ENCODE measurements at regions of chr3 and their contacts with region 1.

Region 1: DNA sequence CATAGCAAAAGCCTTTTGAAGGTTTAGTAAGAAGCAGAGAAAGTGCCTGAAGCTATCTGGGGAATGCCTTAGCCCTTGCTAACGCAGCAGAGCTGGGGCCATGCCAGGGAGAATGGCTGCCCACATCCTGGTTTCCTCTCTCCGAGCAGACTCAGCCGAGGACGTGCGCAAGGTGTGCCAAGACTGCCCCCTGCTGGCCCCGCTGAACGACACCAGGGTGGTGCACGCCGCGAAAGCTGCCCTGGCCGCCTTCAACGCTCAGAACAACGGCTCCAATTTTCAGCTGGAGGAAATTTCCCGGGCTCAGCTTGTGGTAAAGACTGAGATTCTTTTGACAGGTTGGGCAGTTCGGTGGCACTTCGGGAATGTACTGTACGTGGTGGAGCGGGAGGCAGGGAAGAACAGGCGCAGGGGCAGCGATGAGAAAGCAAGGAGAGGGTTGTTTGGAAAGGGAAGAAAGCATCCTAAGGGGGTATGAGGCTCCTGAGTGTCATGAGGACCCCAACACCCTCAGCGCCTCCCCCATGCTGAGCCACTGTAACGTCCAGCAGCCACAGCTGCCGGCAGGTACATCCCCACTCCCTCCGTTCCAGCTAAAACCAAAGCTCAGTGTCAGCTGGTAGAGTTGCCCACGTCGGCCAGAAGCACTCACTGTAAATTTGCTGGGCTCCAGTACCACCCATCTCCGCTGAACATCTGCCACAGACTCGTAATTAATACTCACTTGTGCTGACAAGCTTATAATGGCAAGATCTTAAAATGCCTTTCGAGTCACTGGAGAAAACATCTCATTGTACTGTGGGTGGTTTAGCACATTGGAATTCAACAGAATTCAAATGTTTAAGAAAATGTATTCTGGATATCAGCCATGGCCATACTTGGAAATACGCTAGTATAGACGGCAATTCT is 4.4 kb downstream of the AHSG start:
- DNase-seq: peak; percentile 93
- ATAC-seq: peak; percentile 99
- H3K4me3 Mint-ChIP-seq: peak overlapping the region; percentile 63
- H3K27ac Mint-ChIP-seq: peak overlapping the region; percentile 68
- H3K4me1 Mint-ChIP-seq: peaks cover 22% of the 10 kb centered on the region
- H3K27me3 Mint-ChIP-seq: peaks cover 32% of the 10 kb centered on the region
- CTCF ChIP-seq: peak; percentile 81

Region 2: DNA sequence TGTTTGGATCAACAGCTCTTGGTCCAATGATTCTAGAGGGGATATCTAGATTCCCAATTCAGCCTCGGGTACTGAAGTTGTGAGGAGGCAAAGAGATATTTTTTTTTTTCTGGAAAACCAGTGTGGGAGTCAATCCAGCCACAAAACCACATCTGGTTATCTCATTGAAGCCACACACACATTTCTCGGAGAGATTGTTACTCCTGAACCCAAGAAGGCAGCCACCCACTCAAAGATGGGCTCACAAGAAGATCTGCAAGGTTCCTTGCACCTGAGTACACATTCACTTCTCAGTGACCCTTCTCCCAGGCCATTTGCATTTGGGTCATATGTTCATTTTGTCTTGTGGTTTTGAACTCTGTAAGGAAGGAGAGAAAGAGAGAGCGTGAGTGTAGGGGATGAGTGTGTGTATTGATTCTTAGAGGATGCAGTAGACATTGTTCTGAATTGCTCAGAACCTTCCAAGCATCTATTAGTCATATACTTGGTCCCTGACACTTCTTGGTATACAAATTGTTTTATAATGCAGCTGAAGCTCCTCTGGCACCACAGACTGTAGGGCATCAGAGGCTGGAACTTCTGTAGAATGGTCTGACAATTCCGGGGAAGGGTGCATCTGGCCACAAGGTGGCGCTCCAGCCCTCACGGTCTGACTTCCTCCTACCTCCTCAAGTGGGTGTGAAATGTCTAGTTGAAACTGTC is 640.2 kb before region 1 on chr3:
- CTCF ChIA-PET with region 1: interaction called, 14 read pairs
- POLR2A ChIA-PET with region 1: no interaction called
- intact Hi-C with region 1: no loop called
- DNase-seq: peak; percentile 96
- ATAC-seq: peak; percentile 93
- H3K4me3 Mint-ChIP-seq: peak overlapping the region; percentile 0
- H3K27ac Mint-ChIP-seq: peak overlapping the region; percentile 36
- H3K4me1 Mint-ChIP-seq: peaks cover 16% of the 10 kb centered on the region
- H3K27me3 Mint-ChIP-seq: peaks cover 8% of the 10 kb centered on the region
- CTCF ChIP-seq: peak; percentile 90

Region 3: DNA sequence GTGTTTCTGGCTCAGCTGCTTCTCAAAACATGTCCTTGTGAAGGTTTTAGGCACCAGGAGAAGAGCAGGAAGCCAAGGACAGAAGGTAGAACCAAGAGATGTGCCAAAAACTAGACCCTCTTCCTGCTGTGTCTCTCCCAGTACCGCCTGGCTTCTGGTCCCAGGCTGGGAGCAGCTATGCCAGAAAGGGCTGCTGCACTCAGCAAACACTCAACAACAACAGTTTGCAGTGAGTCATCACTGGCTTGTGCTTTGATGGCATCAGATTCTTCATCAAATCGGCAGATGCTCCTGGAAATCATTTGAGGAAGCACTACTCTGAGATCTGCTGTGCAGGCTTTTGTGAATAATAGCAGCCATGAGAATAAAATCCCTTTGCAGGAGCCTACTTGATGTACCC is 318.4 kb before region 1 on chr3:
- CTCF ChIA-PET with region 1: no interaction called
- POLR2A ChIA-PET with region 1: no interaction called
- intact Hi-C with region 1: no loop called
- DNase-seq: no peak
- ATAC-seq: no peak
- H3K4me3 Mint-ChIP-seq: no peak overlapping the region
- H3K27ac Mint-ChIP-seq: no peak overlapping the region
- H3K4me1 Mint-ChIP-seq: no peaks in the 10 kb centered on the region
- H3K27me3 Mint-ChIP-seq: peaks cover 2% of the 10 kb centered on the region
- CTCF ChIP-seq: no peak

Region 4: DNA sequence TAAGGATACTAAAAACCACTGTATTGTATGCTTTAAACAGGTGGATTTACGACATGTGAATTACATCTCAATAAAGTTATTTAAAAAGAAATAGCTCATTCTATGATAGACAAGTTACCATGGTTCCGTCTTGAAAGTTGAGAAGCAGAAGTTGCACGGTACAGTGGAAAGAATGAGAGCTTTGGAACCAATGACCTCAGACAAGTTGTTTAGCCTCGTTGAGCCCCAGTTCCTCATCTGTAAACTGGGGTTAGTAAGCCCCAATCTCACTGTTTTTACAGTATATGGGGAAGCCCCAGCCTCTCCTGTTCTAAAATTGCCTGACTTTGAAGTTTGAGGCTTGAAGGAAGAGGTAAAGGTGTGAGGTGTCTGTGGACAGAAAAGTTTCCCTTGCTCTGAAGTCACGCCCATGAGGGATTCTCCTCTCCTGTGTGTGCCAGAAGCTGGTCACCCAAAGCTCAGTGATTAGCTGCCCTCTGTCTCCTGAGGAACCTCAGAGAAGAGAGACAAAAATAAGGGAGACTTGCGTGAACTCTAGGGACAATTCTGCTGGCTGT is 83.1 kb before region 1 on chr3:
- CTCF ChIA-PET with region 1: interaction called, 59 read pairs
- POLR2A ChIA-PET with region 1: no interaction called
- intact Hi-C with region 1: no loop called
- DNase-seq: peak; percentile 73
- ATAC-seq: peak; percentile 87
- H3K4me3 Mint-ChIP-seq: peak overlapping the region; percentile 49
- H3K27ac Mint-ChIP-seq: peak overlapping the region; percentile 96
- H3K4me1 Mint-ChIP-seq: peaks cover 92% of the 10 kb centered on the region
- H3K27me3 Mint-ChIP-seq: no peaks in the 10 kb centered on the region
- CTCF ChIP-seq: no peak

Region 5: GRCh38 chr3:186583831-186584230 is 33.5 kb before region 1 on chr3:
- CTCF ChIA-PET with region 1: interaction called, 185 read pairs
- POLR2A ChIA-PET with region 1: no interaction called
- intact Hi-C with region 1: no loop called
- DNase-seq: no peak
- ATAC-seq: no peak
- H3K4me3 Mint-ChIP-seq: no peak overlapping the region
- H3K27ac Mint-ChIP-seq: no peak overlapping the region
- H3K4me1 Mint-ChIP-seq: peaks cover 6% of the 10 kb centered on the region
- H3K27me3 Mint-ChIP-seq: no peaks in the 10 kb centered on the region
- CTCF ChIP-seq: no peak

Region 6: GRCh38 chr3:186772701-186773424 is 155.6 kb after region 1 on chr3:
- CTCF ChIA-PET with region 1: interaction called, 24 read pairs
- POLR2A ChIA-PET with region 1: interaction called, 3 read pairs
- intact Hi-C with region 1: no loop called
- DNase-seq: peak; percentile 91
- ATAC-seq: peak; percentile 94
- H3K4me3 Mint-ChIP-seq: peak overlapping the region; percentile 84
- H3K27ac Mint-ChIP-seq: peak overlapping the region; percentile 95
- H3K4me1 Mint-ChIP-seq: peaks cover 8% of the 10 kb centered on the region
- H3K27me3 Mint-ChIP-seq: no peaks in the 10 kb centered on the region
- CTCF ChIP-seq: no peak

Region 7: DNA sequence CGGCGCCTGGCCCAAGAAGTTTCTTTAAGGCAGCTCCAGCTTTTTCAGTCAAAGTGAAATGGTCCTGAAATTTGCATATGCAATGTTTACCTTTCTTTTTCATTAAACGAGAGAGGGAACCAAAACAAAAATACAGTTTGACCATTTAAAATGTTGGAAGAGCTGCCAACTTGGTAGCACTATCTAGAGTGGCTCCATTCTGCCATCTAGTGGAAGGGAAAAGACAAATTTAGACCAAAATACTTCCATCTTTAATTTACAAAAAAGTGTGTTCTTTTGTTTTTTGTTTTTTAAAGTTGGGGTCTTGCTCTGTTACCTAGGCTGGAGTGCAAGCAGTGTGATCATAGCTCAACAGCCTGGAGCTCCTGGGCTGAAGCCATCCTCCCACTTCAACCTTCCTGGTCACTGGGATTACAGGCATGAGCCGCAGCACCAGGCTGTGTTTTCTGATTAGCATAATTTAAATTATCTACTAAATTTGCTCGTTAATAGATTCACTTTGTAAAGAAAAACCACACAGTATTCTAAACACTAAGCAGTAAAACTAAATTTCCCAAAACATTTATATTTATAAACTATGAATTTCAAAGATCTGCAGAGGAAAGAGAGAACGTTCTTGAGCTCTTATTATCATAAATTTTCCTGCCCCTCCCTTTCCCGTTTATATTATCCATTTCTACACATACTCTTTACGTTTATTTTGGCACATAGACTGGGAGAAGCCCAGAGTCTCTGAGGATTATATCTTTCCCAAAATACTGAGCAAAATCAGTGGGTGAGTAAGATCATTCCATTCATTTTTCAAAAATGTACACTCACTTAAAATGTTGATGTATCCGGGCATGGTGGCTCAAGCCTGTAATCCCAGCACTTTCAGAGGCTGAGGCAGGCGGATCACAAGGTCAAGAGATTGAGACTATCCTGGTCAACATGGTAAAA is 204.4 kb after region 1 on chr3:
- CTCF ChIA-PET with region 1: interaction called, 129 read pairs
- POLR2A ChIA-PET with region 1: interaction called, 4 read pairs
- intact Hi-C with region 1: loop called (anchors 5 kb)
- DNase-seq: no peak
- ATAC-seq: no peak
- H3K4me3 Mint-ChIP-seq: no peak overlapping the region
- H3K27ac Mint-ChIP-seq: no peak overlapping the region
- H3K4me1 Mint-ChIP-seq: peaks cover 23% of the 10 kb centered on the region
- H3K27me3 Mint-ChIP-seq: peaks cover 5% of the 10 kb centered on the region
- CTCF ChIP-seq: peak; percentile 64

Region 8: GRCh38 chr3:187101184-187102072 is 484.1 kb after region 1 on chr3:
- CTCF ChIA-PET with region 1: no interaction called
- POLR2A ChIA-PET with region 1: no interaction called
- intact Hi-C with region 1: no loop called
- DNase-seq: peak; percentile 66
- ATAC-seq: peak; percentile 73
- H3K4me3 Mint-ChIP-seq: no peak overlapping the region
- H3K27ac Mint-ChIP-seq: peak overlapping the region; percentile 26
- H3K4me1 Mint-ChIP-seq: peaks cover 29% of the 10 kb centered on the region
- H3K27me3 Mint-ChIP-seq: no peaks in the 10 kb centered on the region
- CTCF ChIP-seq: no peak

Measured in activated CD8-positive, alpha-beta T cell treated with anti-CD3 and anti-CD28 coated beads for 36 hours (primary cell).